CD8-positive, alpha-beta T cell (primary cell): ENCODE measurements at regions of chr11 and their contacts with region 1.

Region 1: DNA sequence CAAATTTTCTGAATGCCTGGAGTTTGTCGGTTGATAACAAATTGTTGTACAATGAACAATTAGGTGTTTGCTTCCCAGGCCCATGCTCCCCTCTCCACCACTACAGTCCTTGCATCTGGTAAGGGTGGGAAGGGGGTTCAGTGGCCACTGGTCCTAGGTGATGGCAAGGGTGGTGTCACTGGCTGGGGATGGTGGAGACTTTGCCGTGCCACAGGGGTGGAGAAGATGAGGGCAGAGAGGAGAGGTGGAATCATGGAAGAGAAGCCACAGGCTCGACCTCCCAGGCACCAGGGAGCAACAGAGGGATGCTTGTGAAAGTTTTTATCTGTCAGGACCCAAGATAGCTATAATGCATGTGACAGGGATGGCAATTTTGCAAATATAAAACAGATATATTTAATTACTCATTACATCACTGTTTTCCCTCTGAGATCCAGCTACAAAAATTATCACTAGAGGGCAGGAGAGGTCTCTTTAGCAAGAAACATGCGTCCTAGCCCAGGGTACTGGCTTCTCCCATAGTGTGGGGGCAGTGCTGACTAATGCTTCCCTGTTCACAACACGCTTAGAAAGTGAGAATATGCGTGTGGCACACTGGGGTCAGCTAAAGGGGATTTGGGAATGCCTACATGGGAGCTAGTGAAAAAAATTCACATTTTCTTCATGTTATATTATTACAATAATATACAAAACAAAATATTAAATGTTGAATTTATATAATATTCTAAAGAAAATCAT is 49.0 kb upstream of the AMPD3 start:
- DNase-seq: peak in 7 of 9 experiments; percentile 16 to 75 (median 43)
- ATAC-seq: peak; percentile 73
- H3K4me3 ChIP-seq: no peak overlapping the region
- H3K4me3 Mint-ChIP-seq: no peak overlapping the region
- H3K27ac ChIP-seq: no peak overlapping the region
- H3K27ac Mint-ChIP-seq: no peak overlapping the region
- H3K4me1 ChIP-seq: peaks cover 9% of the 10 kb centered on the region
- H3K4me1 Mint-ChIP-seq: peaks cover 13% of the 10 kb centered on the region
- H3K27me3 ChIP-seq: no peaks in the 10 kb centered on the region
- H3K27me3 Mint-ChIP-seq: no peaks in the 10 kb centered on the region
- CTCF ChIP-seq: peak; percentile 66

Region 2: GRCh38 chr11:10351768-10352641 is 54.0 kb before region 1 on chr11:
- CTCF ChIA-PET with region 1: no interaction called
- POLR2A ChIA-PET with region 1: no interaction called
- intact Hi-C with region 1: no loop called
- DNase-seq: no peak
- ATAC-seq: no peak
- H3K4me3 ChIP-seq: no peak overlapping the region
- H3K4me3 Mint-ChIP-seq: no peak overlapping the region
- H3K27ac ChIP-seq: no peak overlapping the region
- H3K27ac Mint-ChIP-seq: no peak overlapping the region
- H3K4me1 ChIP-seq: no peaks in the 10 kb centered on the region
- H3K4me1 Mint-ChIP-seq: no peaks in the 10 kb centered on the region
- H3K27me3 ChIP-seq: peaks cover 0 to 4% of the 10 kb centered on the region in 2 experiments
- H3K27me3 Mint-ChIP-seq: peaks cover 10% of the 10 kb centered on the region
- CTCF ChIP-seq: no peak

Region 3: GRCh38 chr11:10462746-10463300 is 56.8 kb after region 1 on chr11:
- CTCF ChIA-PET with region 1: interaction called, 7 read pairs
- POLR2A ChIA-PET with region 1: interaction called, 3 read pairs
- intact Hi-C with region 1: loop called in 1 of 2 experiments (anchors 1 kb)
- DNase-seq: peak in 1 of 9 experiments; percentile 15
- ATAC-seq: no peak
- H3K4me3 ChIP-seq: no peak overlapping the region
- H3K4me3 Mint-ChIP-seq: no peak overlapping the region
- H3K27ac ChIP-seq: no peak overlapping the region
- H3K27ac Mint-ChIP-seq: no peak overlapping the region
- H3K4me1 ChIP-seq: peaks cover 19% of the 10 kb centered on the region
- H3K4me1 Mint-ChIP-seq: peaks cover 51% of the 10 kb centered on the region
- H3K27me3 ChIP-seq: no peaks in the 10 kb centered on the region
- H3K27me3 Mint-ChIP-seq: no peaks in the 10 kb centered on the region
- CTCF ChIP-seq: no peak

Region 4: DNA sequence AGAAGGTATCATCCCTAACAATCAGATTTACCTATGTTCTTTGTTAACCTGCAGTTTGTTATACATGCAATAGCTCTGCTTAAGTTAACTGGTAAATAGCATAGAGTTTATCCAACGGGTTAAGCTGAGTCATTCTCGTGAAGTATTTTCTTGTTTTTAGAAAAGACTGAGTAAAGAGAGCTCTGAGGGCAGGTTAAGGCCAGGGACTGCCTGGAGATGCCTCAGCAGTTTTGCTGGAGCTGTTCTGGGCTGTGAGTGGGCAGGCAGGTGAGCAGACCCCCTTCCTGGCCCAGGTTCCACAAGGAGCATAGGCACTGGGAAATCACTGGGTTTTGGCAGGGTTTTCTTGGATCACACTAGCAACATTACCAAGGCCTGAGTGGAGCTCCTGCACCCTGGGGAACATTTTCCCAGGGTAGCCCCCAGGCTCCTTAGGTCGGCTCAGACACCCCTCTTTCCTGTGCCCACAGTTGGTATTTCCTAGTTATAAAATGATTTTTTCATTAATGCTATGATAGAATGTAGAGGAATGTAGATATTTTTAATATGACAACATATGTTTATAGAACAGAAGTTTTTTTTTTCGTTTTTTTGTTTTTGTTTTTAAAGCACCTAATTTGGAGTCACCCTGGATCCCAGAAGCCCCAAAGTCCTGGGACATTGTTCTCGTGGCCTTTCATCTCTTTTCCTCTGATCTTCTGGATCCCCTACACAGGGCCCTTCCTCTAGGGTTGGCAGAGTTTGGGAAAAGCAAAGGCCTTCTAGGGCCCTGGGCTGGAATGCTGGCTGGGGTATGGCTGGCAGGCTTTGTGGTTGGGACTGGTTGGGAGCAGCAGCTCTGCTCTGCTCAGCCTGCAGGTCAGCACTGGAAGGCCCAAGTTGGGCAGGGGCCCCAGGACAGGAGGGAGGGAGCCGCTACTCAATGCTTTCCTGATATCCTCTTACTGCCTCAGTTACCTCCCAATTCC is 260.8 kb after region 1 on chr11:
- CTCF ChIA-PET with region 1: interaction called, 14 read pairs
- POLR2A ChIA-PET with region 1: no interaction called
- intact Hi-C with region 1: no loop called
- DNase-seq: no peak
- ATAC-seq: no peak
- H3K4me3 ChIP-seq: no peak overlapping the region
- H3K4me3 Mint-ChIP-seq: no peak overlapping the region
- H3K27ac ChIP-seq: no peak overlapping the region
- H3K27ac Mint-ChIP-seq: no peak overlapping the region
- H3K4me1 ChIP-seq: no peaks in the 10 kb centered on the region
- H3K4me1 Mint-ChIP-seq: no peaks in the 10 kb centered on the region
- H3K27me3 ChIP-seq: peaks cover 0 to 2% of the 10 kb centered on the region in 2 experiments
- H3K27me3 Mint-ChIP-seq: peaks cover 5% of the 10 kb centered on the region
- CTCF ChIP-seq: no peak

Region 5: GRCh38 chr11:10728789-10729472 is 322.9 kb after region 1 on chr11:
- CTCF ChIA-PET with region 1: interaction called, 17 read pairs
- POLR2A ChIA-PET with region 1: no interaction called
- intact Hi-C with region 1: no loop called
- DNase-seq: no peak
- ATAC-seq: no peak
- H3K4me3 ChIP-seq: no peak overlapping the region
- H3K4me3 Mint-ChIP-seq: no peak overlapping the region
- H3K27ac ChIP-seq: no peak overlapping the region
- H3K27ac Mint-ChIP-seq: no peak overlapping the region
- H3K4me1 ChIP-seq: peaks cover 11% of the 10 kb centered on the region
- H3K4me1 Mint-ChIP-seq: peaks cover 18% of the 10 kb centered on the region
- H3K27me3 ChIP-seq: peaks cover 0 to 3% of the 10 kb centered on the region in 2 experiments
- H3K27me3 Mint-ChIP-seq: peaks cover 8% of the 10 kb centered on the region
- CTCF ChIP-seq: no peak

Region 6: GRCh38 chr11:10735481-10736475 is 329.8 kb after region 1 on chr11:
- CTCF ChIA-PET with region 1: interaction called, 20 read pairs
- POLR2A ChIA-PET with region 1: no interaction called
- intact Hi-C with region 1: loop called (anchors 1 kb)
- DNase-seq: peak; percentile 73 to 91 (median 85)
- ATAC-seq: peak; percentile 99
- H3K4me3 ChIP-seq: peak overlapping the region; percentile 3 to 20
- H3K4me3 Mint-ChIP-seq: peak overlapping the region; percentile 56
- H3K27ac ChIP-seq: no peak overlapping the region
- H3K27ac Mint-ChIP-seq: no peak overlapping the region
- H3K4me1 ChIP-seq: peaks cover 9% of the 10 kb centered on the region
- H3K4me1 Mint-ChIP-seq: peaks cover 13% of the 10 kb centered on the region
- H3K27me3 ChIP-seq: no peaks in the 10 kb centered on the region
- H3K27me3 Mint-ChIP-seq: no peaks in the 10 kb centered on the region
- CTCF ChIP-seq: peak; percentile 96